Right ventricle myocardium superior (tissue), 1 donor: ENCODE measurements at regions of chr1 and their contacts with region 1.

Region 1: GRCh38 chr1:41795205-41795762 is 123.4 kb downstream of the HIVEP3 start:
- DNase-seq: no peak
- ATAC-seq: no peak

Region 2: GRCh38 chr1:41573785-41574713 is 221.2 kb before region 1 on chr1:
- intact Hi-C with region 1: loop called (anchors 10 kb)
- DNase-seq: peak; percentile 85
- ATAC-seq: peak; percentile 94

Region 3: GRCh38 chr1:41622859-41623723 is 172.2 kb before region 1 on chr1:
- intact Hi-C with region 1: loop called (anchors 10 kb)
- DNase-seq: no peak
- ATAC-seq: no peak